ENCODE measurements at regions of chr6 and their contacts with region 1.

Region 1: GRCh38 chr6:122049341-122049740 is 350.1 kb upstream of the HSF2 start:
- DNase-seq: peak in 1 of 2 donors; percentile 18
- ATAC-seq: peak in 4 of 8 donors; percentile 55 to 73 (median 60)
- H3K4me3 ChIP-seq: peak overlapping the region in 5 of 10 donors; percentile 3 to 25 (median 17)
- H3K27ac ChIP-seq: no peak overlapping the region
- H3K4me1 ChIP-seq: peaks cover 0 to 5% (median 0%) of the 10 kb centered on the region in 9 donors
- H3K27me3 ChIP-seq: no peaks in the 10 kb centered on the region
- CTCF ChIP-seq: no peak

Region 2: DNA sequence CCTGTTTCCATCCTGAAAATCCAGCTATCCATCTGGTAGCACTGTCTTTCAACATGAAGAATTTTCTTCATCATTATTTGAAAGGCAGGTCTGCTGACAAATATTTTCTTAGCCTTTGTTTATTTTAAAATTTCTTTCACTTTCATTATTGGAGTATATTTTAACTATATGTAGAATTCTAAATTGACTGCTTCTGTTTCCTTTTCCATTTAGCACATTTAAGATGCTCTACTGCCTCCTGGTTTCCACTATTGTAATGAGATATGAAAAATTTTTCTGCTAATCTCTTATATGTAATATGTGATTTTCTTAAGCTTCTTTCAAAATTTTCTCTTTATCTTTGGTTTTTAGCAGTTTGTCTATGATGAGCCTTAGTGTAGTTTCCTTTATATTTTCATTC is 812.4 kb before region 1 on chr6:
- intact Hi-C with region 1: no loop called
- DNase-seq: no peak
- ATAC-seq: no peak
- H3K4me3 ChIP-seq: no peak overlapping the region
- H3K27ac ChIP-seq: no peak overlapping the region
- H3K4me1 ChIP-seq: no peaks in the 10 kb centered on the region
- H3K27me3 ChIP-seq: no peaks in the 10 kb centered on the region
- CTCF ChIP-seq: no peak

Region 3: GRCh38 chr6:121506761-121507754 is 542.3 kb before region 1 on chr6:
- intact Hi-C with region 1: no loop called
- DNase-seq: no peak
- ATAC-seq: no peak
- H3K4me3 ChIP-seq: no peak overlapping the region
- H3K27ac ChIP-seq: no peak overlapping the region
- H3K4me1 ChIP-seq: peaks cover 0 to 9% (median 0%) of the 10 kb centered on the region in 9 donors
- H3K27me3 ChIP-seq: no peaks in the 10 kb centered on the region
- CTCF ChIP-seq: no peak

Region 4: GRCh38 chr6:121531658-121532169 is 517.6 kb before region 1 on chr6:
- intact Hi-C with region 1: no loop called
- DNase-seq: no peak
- ATAC-seq: no peak
- H3K4me3 ChIP-seq: no peak overlapping the region
- H3K27ac ChIP-seq: no peak overlapping the region
- H3K4me1 ChIP-seq: no peaks in the 10 kb centered on the region
- H3K27me3 ChIP-seq: no peaks in the 10 kb centered on the region
- CTCF ChIP-seq: no peak

Region 5: GRCh38 chr6:121932076-121932991 is 117.0 kb before region 1 on chr6:
- intact Hi-C with region 1: no loop called
- DNase-seq: peak in 1 of 2 donors; percentile 44
- ATAC-seq: peak; percentile 73 to 94 (median 88)
- H3K4me3 ChIP-seq: peak overlapping the region in 1 of 10 donors; percentile 12
- H3K27ac ChIP-seq: peak overlapping the region in 3 of 10 donors; percentile 29 to 47 (median 42)
- H3K4me1 ChIP-seq: peaks cover 0 to 19% (median 13%) of the 10 kb centered on the region in 9 donors
- H3K27me3 ChIP-seq: no peaks in the 10 kb centered on the region
- CTCF ChIP-seq: no peak

Region 6: DNA sequence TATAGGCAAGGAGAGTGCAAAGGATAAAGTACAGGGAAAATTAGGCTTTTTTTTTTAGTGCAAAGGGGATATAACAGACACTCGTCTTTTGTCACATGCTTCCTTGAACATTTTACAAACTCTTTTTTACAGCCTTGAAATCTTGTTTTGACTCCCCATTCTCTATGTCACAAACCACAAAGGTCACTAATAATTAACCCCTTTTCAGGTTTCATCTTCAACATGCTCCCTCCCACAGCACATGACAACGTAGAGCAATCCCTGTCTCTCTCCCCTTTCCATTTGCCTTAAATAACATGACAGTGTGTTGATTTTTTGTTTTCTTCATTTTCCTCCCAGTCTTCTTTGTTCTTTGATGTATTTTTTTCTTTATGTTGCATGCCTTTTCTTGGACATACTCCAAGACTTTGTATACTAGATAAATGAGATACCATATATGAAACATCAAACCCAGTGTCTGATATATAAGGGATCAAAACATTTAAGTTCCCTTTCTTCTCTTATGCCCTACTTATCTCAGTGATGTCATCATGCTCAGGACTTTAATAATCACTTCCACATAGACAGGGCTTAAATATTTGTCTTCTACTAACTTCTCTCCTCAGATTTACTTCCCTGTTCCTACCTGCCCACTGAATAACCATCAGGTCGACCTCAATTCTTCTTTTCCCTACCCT is 28.6 kb before region 1 on chr6:
- intact Hi-C with region 1: loop called in 1 of 10 experiments (anchors 1 kb)
- DNase-seq: no peak
- ATAC-seq: no peak
- H3K4me3 ChIP-seq: no peak overlapping the region
- H3K27ac ChIP-seq: no peak overlapping the region
- H3K4me1 ChIP-seq: no peaks in the 10 kb centered on the region
- H3K27me3 ChIP-seq: no peaks in the 10 kb centered on the region
- CTCF ChIP-seq: no peak

Region 7: DNA sequence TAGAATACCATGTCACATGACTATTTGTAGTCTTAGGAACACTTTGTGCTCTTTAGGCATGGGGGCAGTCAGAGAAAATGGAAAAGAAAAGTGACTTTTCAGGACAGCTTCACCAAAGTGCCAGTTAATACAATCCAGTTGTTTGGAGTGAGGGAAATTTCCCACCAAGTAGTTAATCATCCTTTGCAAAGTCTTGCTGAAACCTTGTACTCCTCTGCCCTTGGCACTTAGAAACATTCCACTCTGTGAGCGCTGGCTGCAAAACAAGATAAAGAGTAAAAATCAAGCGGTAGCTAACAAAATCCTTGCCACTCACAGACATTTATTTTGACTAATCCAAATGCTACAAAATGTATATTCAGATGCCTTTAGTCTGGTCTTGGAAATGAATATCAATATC is 120.9 kb after region 1 on chr6:
- intact Hi-C with region 1: loop called in 2 of 10 experiments (anchors 10 kb)
- DNase-seq: no peak
- ATAC-seq: no peak
- H3K4me3 ChIP-seq: no peak overlapping the region
- H3K27ac ChIP-seq: no peak overlapping the region
- H3K4me1 ChIP-seq: no peaks in the 10 kb centered on the region
- H3K27me3 ChIP-seq: no peaks in the 10 kb centered on the region
- CTCF ChIP-seq: no peak

Measured in heart right ventricle (tissue), 16 donors.